ENCODE measurements at regions of chr17 and their contacts with region 1.

Region 1: GRCh38 chr17:41959336-41960095 is 7.1 kb upstream of the CNP start:
- DNase-seq: peak; percentile 73
- H3K4me3 ChIP-seq: no peak overlapping the region
- H3K27ac ChIP-seq: no peak overlapping the region; a peak in 1 of 4 replicates
- H3K4me1 ChIP-seq: peaks cover 0 to 11% of the 10 kb centered on the region in 2 experiments; a peak in 1 of 4 replicates
- H3K27me3 ChIP-seq: no peaks in the 10 kb centered on the region
- CTCF ChIP-seq: peak; percentile 52
- EP300 ChIP-seq: no peak
- RAD21 ChIP-seq: peak; percentile 75

Region 2: GRCh38 chr17:41948762-41949460 is 10.6 kb before region 1 on chr17:
- CTCF ChIA-PET with region 1: interaction called, 17 read pairs
- POLR2A ChIA-PET with region 1: no interaction called
- DNase-seq: no peak
- H3K4me3 ChIP-seq: no peak overlapping the region
- H3K27ac ChIP-seq: no peak overlapping the region
- H3K4me1 ChIP-seq: no peaks in the 10 kb centered on the region
- H3K27me3 ChIP-seq: no peaks in the 10 kb centered on the region
- CTCF ChIP-seq: no peak
- EP300 ChIP-seq: no peak
- RAD21 ChIP-seq: no peak